ENCODE measurements at regions of chr16 and their contacts with region 1.

Region 1: GRCh38 chr16:68778551-68779231 is 41.6 kb downstream of the CDH1 start:
- DNase-seq: peak in 1 of 2 experiments; percentile 53
- H3K4me3 ChIP-seq: no peak overlapping the region
- H3K4me3 Mint-ChIP-seq: no peak overlapping the region
- H3K27ac Mint-ChIP-seq: peak overlapping the region; percentile 71
- H3K4me1 ChIP-seq: peaks cover 36% of the 10 kb centered on the region
- H3K4me1 Mint-ChIP-seq: peaks cover 37% of the 10 kb centered on the region
- H3K27me3 ChIP-seq: no peaks in the 10 kb centered on the region
- H3K27me3 Mint-ChIP-seq: no peaks in the 10 kb centered on the region
- CTCF ChIP-seq: no peak

Region 2: GRCh38 chr16:68676113-68676860 is 102.4 kb before region 1 on chr16:
- CTCF ChIA-PET with region 1: no interaction called
- POLR2A ChIA-PET with region 1: no interaction called
- intact Hi-C with region 1: no loop called
- DNase-seq: no peak
- H3K4me3 ChIP-seq: no peak overlapping the region
- H3K4me3 Mint-ChIP-seq: no peak overlapping the region
- H3K27ac Mint-ChIP-seq: no peak overlapping the region
- H3K4me1 ChIP-seq: no peaks in the 10 kb centered on the region
- H3K4me1 Mint-ChIP-seq: no peaks in the 10 kb centered on the region
- H3K27me3 ChIP-seq: no peaks in the 10 kb centered on the region
- H3K27me3 Mint-ChIP-seq: no peaks in the 10 kb centered on the region
- CTCF ChIP-seq: no peak

Region 3: DNA sequence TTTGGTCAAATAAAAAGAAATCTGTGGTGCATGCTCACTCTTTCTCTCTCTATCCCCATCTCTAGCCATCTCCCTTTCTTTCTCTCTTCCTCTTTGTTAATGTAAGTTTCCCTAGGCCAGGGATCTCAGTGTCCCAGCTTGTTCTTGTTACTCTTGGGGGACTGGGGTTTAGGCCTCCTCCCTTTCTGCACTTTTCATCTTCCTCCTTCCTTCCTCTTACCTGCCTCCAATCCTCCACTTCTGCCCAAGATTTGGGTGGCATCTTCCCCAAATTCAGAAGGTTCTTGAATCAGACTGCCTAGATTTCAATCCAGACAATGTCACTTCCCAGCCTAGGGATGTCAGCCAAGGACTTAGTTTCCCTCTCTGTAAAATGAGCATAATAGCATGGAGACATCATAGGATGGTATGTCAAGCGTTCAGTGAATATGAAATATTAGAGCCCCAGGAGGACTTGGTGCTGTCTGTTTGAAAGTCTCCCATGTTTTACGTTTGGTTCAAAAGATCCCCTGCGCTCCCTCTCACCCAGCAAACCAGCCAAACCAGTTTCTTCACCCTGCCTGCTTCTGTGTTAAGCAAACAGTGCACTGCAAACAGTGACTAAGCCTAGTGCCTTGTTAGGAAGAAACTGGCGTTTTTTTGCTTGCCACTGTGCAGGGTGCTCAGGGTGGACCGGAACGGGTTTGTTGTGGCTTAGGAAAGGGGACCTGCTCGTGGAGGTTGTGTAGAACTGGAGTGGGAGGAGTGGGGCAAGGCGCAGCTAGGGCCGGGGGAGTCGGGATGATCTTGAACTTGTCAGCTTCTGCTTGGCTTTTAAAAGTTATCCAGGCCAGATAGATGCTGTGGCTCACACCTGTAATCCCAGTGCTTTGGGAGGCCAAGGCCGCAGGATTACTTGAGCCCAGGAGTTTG is 34.1 kb before region 1 on chr16:
- CTCF ChIA-PET with region 1: interaction called, 4 read pairs
- POLR2A ChIA-PET with region 1: no interaction called
- intact Hi-C with region 1: loop called (anchors 2 kb)
- DNase-seq: peak; percentile 96
- H3K4me3 ChIP-seq: peak overlapping the region; percentile 13; the same call in 1 of the 2 replicates
- H3K4me3 Mint-ChIP-seq: peak overlapping the region; percentile 70
- H3K27ac Mint-ChIP-seq: peak overlapping the region; percentile 93
- H3K4me1 ChIP-seq: peaks cover 92% of the 10 kb centered on the region
- H3K4me1 Mint-ChIP-seq: peaks cover 74% of the 10 kb centered on the region
- H3K27me3 ChIP-seq: no peaks in the 10 kb centered on the region
- H3K27me3 Mint-ChIP-seq: no peaks in the 10 kb centered on the region
- CTCF ChIP-seq: no peak

Region 4: DNA sequence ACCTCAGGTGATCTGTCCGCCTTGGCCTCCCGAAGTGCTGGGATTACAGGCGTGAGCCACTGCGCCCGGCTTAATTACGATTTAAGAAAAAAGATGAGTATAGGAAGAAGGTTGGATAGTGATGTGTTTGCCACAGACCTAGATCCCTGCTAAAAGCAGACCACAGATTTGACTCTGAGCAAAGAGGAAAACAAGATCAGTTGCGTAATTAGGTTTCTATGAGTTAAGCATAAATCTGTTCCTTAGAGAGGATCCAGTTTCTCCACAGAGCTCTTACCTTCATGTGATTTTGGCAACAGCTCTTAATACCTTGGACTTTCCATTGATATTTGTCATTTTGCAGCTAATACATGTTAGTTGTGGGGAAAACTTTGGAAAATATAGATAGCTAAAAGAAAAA is 10.5 kb before region 1 on chr16:
- CTCF ChIA-PET with region 1: no interaction called
- POLR2A ChIA-PET with region 1: interaction called, 12 read pairs
- intact Hi-C with region 1: no loop called
- DNase-seq: no peak
- H3K4me3 ChIP-seq: no peak overlapping the region
- H3K4me3 Mint-ChIP-seq: no peak overlapping the region
- H3K27ac Mint-ChIP-seq: no peak overlapping the region
- H3K4me1 ChIP-seq: peaks cover 20% of the 10 kb centered on the region
- H3K4me1 Mint-ChIP-seq: peaks cover 23% of the 10 kb centered on the region
- H3K27me3 ChIP-seq: no peaks in the 10 kb centered on the region
- H3K27me3 Mint-ChIP-seq: no peaks in the 10 kb centered on the region
- CTCF ChIP-seq: no peak

Region 5: GRCh38 chr16:68800257-68800875 is 21.7 kb after region 1 on chr16:
- CTCF ChIA-PET with region 1: interaction called, 3 read pairs
- POLR2A ChIA-PET with region 1: interaction called, 5 read pairs
- intact Hi-C with region 1: loop called (anchors 2 kb)
- DNase-seq: peak; percentile 83 to 88
- H3K4me3 ChIP-seq: no peak overlapping the region
- H3K4me3 Mint-ChIP-seq: no peak overlapping the region
- H3K27ac Mint-ChIP-seq: peak overlapping the region; percentile 7
- H3K4me1 ChIP-seq: peaks cover 62% of the 10 kb centered on the region
- H3K4me1 Mint-ChIP-seq: peaks cover 18% of the 10 kb centered on the region
- H3K27me3 ChIP-seq: no peaks in the 10 kb centered on the region
- H3K27me3 Mint-ChIP-seq: no peaks in the 10 kb centered on the region
- CTCF ChIP-seq: peak; percentile 85 to 86

Measured in Caco-2 (cell line).